ENCODE measurements at regions of chr11 and their contacts with region 1.

Region 1: GRCh38 chr11:86068951-86069407 is at the start of gene PICALM:
- DNase-seq: peak; percentile 93
- H3K4me3 ChIP-seq: peak within 1 kb of the TSS; percentile 94
- CTCF ChIP-seq: no peak

Region 2: DNA sequence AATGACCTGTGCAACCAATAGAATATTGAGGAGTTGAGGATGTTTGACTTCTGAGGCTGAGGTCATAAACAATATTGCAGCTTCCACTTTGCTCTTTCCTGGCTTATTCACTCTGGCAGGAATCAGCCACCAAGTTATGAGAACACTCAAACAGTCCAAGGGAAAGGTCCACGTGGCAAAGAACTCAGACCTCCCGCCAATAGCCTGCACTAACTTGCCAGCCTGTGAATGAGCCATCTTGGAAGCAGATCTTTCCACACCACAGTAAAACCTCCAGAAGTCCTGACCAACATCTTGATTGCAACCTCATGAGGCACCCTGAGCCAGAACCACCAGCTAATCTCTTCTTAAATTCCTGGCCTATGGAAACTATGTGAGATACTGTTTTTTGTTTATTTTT is 22.6 kb after region 1 on chr11:
- CTCF ChIA-PET with region 1: no interaction called
- POLR2A ChIA-PET with region 1: interaction called, 14 read pairs
- DNase-seq: peak; percentile 71
- H3K4me3 ChIP-seq: no peak overlapping the region
- CTCF ChIP-seq: no peak

Region 3: DNA sequence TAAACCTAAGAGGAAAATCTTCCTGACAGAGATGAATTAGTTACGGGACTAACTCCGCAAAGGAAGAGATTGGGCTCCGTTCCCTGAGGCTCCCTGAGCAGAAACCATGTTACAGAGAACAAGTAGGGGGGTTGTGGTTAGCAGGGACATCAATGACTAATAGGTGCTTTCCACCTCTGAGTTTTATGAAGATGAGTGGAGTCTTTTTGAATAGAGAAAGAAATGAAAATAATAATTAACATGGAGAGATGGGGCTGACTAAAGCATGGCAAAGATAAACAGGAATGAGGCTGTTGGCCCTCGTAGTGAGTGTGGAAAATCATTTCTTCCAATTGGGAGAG is 47.4 kb after region 1 on chr11:
- CTCF ChIA-PET with region 1: interaction called, 3 read pairs
- POLR2A ChIA-PET with region 1: interaction called, 19 read pairs
- DNase-seq: peak; percentile 87
- H3K4me3 ChIP-seq: no peak overlapping the region
- CTCF ChIP-seq: no peak